K562 (cell line): ENCODE measurements at regions of chr14 and their contacts with region 1.

Region 1: DNA sequence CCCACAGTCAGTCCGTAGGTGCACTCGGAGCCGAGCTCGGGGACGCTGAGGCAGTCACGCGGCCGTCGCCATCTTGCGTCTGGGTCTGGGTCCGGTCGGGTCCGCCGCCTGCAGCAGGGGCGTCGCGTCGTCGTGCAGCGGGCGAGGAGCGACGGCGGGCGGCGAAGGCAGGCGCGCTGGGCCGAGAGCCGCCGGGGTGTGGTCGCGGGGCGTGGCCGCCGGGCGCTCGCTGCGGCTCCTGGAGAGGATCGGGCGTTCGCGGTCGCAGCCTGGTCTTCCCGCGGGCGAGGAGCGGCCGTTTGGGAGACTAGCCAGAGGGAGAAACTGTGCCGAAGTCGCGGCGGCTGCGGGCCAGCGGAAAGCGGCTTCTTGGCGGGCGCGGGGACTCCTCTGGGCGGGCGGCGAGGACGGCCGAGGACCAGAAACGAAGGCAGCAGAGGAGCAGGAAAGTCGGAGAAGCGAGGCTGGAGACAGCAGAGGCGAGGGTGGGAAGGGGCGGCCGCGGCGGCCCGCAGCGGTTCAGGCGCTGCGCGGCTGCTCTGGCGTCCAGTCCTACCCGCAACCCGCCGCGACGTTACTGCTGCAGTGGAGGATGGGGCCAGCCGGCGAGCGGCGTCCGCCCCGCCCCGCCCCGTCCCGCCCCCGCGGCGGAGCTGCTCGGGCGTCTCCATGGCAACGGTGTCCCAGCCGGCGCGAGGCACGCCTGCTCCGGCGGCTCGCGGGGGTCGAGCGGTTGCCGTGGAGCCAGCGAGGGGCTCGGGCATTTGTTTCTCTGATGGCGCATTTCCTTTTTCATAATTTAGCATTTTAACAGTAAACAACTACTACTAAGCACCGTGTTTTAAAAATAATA is at the start of gene PNMA1:
- DNase-seq: peak; percentile 87 to 92 (median 88)
- ATAC-seq: peak; percentile 88
- H3K4me3 ChIP-seq: peak within 1 kb of the TSS; percentile 69
- H3K27ac ChIP-seq: peak within 1 kb of the TSS; percentile 85
- H3K4me1 ChIP-seq: peaks cover 11 to 39% of the 10 kb centered on the region in 2 experiments; a peak in 4 of 5 replicates
- H3K27me3 ChIP-seq: no peaks in the 10 kb centered on the region
- CTCF ChIP-seq: 0 out of 6 replicates have a peak, but pooled peaks of 1 of the 3 experiments have one; percentile 1
- EP300 ChIP-seq: no peak
- POLR2A ChIP-seq: peak; percentile 72
- RAD21 ChIP-seq: 0 out of 4 replicates have a peak, but pooled peaks of 1 of the 2 experiments have one; percentile 1
- polyA plus RNA-seq, gene PNMA1: 1.7 to 2.4 TPM

Region 2: DNA sequence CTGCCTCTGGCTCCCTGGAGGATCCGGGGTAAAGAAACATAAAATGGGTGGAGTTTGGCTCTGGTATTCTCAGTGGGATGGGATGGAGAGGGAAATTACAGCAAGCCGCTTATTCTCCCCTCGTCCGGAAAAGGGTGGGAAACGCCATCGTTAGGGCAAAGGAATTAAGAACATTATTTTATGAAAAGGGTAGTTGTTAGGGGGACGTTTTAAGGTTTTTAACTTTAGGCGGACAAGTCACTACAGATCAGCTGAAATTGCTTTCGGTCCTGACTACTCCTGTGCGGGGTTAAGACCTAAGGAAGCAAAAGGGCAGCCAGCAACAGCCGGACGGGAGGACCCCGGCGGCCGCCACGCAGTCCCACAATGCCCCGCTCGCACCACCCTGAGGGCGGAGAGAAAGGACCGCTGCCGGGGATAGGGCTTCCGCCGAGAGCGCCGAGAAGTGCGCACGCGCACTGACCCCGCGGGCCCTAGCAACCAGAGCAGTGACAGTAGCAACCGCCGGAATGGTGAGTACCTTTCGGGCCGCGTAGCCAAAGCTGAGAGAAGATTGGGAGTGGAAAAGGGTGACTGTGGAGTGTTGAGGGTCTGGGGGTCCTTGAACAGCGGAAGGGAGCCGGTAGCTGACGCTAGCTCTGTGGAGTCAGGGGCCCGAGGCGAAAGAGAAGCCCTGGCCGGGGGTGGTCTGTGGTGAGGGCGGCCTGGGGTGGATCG is 69.3 kb before region 1 on chr14 and contains the start of gene DNAL1:
- CTCF ChIA-PET with region 1: no interaction called
- POLR2A ChIA-PET with region 1: no interaction called
- in situ Hi-C with region 1: no loop called
- intact Hi-C with region 1: loop called (anchors 2 kb)
- DNase-seq: peak; percentile 92 to 94 (median 94)
- ATAC-seq: peak; percentile 100
- H3K4me3 ChIP-seq: peak within 1 kb of the TSS; percentile 56
- H3K27ac ChIP-seq: peak within 1 kb of the TSS; percentile 75
- H3K4me1 ChIP-seq: peaks cover 0 to 8% of the 10 kb centered on the region in 2 experiments; a peak in 3 of 5 replicates
- H3K27me3 ChIP-seq: no peaks in the 10 kb centered on the region
- CTCF ChIP-seq: no peak
- EP300 ChIP-seq: no peak
- POLR2A ChIP-seq: peak; percentile 84
- RAD21 ChIP-seq: no peak
- polyA plus RNA-seq, gene DNAL1: 8.9 to 11.7 TPM

Region 3: GRCh38 chr14:74207947-74208346 is 493.9 kb after region 1 on chr14:
- CTCF ChIA-PET with region 1: no interaction called
- POLR2A ChIA-PET with region 1: no interaction called
- in situ Hi-C with region 1: no loop called
- intact Hi-C with region 1: no loop called
- DNase-seq: peak in 1 of 4 experiments; percentile 18
- ATAC-seq: peak; percentile 45; the same call in 1 of the 3 replicates
- H3K4me3 ChIP-seq: no peak overlapping the region
- H3K27ac ChIP-seq: no peak overlapping the region
- H3K4me1 ChIP-seq: peaks cover 0 to 2% of the 10 kb centered on the region in 2 experiments; a peak in 1 of 5 replicates
- H3K27me3 ChIP-seq: no peaks in the 10 kb centered on the region
- CTCF ChIP-seq: peak; percentile 46 to 49 (median 48); a peak in 5 of 6 replicates
- EP300 ChIP-seq: no peak
- POLR2A ChIP-seq: no peak
- RAD21 ChIP-seq: peak in 1 of 2 experiments; percentile 51; a peak in 2 of 4 replicates